Caco-2 (cell line): ENCODE measurements at regions of chr10 and their contacts with region 1.

Region 1: GRCh38 chr10:6275022-6275997 is 72.6 kb downstream of the PFKFB3 start:
- DNase-seq: peak; percentile 57 to 82
- H3K4me3 ChIP-seq: no peak overlapping the region
- H3K4me3 Mint-ChIP-seq: peak overlapping the region; percentile 66
- H3K27ac Mint-ChIP-seq: peak overlapping the region; percentile 51
- H3K4me1 ChIP-seq: peaks cover 35% of the 10 kb centered on the region
- H3K4me1 Mint-ChIP-seq: peaks cover 20% of the 10 kb centered on the region
- H3K27me3 ChIP-seq: no peaks in the 10 kb centered on the region
- H3K27me3 Mint-ChIP-seq: no peaks in the 10 kb centered on the region
- CTCF ChIP-seq: no peak

Region 2: GRCh38 chr10:5800790-5801189 is 474.5 kb before region 1 on chr10:
- CTCF ChIA-PET with region 1: no interaction called
- POLR2A ChIA-PET with region 1: no interaction called
- intact Hi-C with region 1: no loop called
- DNase-seq: no peak
- H3K4me3 ChIP-seq: no peak overlapping the region
- H3K4me3 Mint-ChIP-seq: no peak overlapping the region
- H3K27ac Mint-ChIP-seq: no peak overlapping the region
- H3K4me1 ChIP-seq: no peaks in the 10 kb centered on the region
- H3K4me1 Mint-ChIP-seq: peaks cover 6% of the 10 kb centered on the region
- H3K27me3 ChIP-seq: no peaks in the 10 kb centered on the region
- H3K27me3 Mint-ChIP-seq: no peaks in the 10 kb centered on the region
- CTCF ChIP-seq: no peak

Region 3: DNA sequence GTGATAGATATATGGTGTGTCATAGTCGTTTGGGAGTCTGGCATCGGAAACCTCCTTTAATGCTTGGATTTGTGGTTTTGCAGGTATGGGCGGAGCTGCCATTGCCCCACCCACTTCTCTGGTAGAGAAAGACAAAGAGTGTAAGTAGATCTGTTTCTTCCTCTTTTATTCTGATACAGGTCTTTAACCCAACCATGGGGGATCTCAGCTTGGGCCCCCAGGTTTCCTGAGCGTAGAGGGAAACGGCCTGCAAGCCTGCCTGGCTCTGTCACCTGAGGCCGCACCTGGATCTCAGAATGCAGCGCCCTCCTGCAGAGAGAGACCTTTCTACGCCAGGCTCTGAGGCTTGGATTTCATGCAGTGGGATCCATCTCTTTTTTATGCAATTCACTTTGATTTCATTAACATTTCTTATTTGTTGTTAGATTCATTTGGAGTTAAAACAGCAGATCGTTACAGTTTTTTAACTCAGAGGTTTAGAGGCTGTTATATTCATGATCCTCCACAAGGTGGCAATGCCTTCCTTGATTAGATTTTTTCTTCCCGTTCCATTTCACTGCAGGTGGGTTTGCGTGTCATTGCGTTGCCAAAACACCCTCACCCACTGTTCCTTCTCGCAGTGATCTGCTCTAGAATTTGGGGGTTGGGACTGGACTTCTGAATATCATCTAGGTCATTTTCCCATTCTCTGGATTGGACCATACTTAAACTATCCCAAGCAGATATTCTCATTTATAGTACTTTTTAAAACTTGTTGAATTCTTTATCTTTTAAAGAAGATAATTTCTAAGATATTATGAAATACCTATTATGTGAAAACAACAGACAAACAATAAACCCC is 166.5 kb before region 1 on chr10:
- CTCF ChIA-PET with region 1: no interaction called
- POLR2A ChIA-PET with region 1: no interaction called
- intact Hi-C with region 1: no loop called
- DNase-seq: peak in 1 of 2 experiments; percentile 47
- H3K4me3 ChIP-seq: no peak overlapping the region
- H3K4me3 Mint-ChIP-seq: no peak overlapping the region
- H3K27ac Mint-ChIP-seq: no peak overlapping the region
- H3K4me1 ChIP-seq: no peaks in the 10 kb centered on the region
- H3K4me1 Mint-ChIP-seq: no peaks in the 10 kb centered on the region
- H3K27me3 ChIP-seq: no peaks in the 10 kb centered on the region
- H3K27me3 Mint-ChIP-seq: no peaks in the 10 kb centered on the region
- CTCF ChIP-seq: peak; percentile 61 to 85

Region 4: GRCh38 chr10:6144406-6145165 is 130.7 kb before region 1 on chr10:
- CTCF ChIA-PET with region 1: no interaction called
- POLR2A ChIA-PET with region 1: no interaction called
- intact Hi-C with region 1: no loop called
- DNase-seq: peak; percentile 88 to 92
- H3K4me3 ChIP-seq: peak overlapping the region; percentile 94
- H3K4me3 Mint-ChIP-seq: peak overlapping the region; percentile 90
- H3K27ac Mint-ChIP-seq: peak overlapping the region; percentile 66
- H3K4me1 ChIP-seq: peaks cover 10% of the 10 kb centered on the region; the same call in 1 of the 2 replicates
- H3K4me1 Mint-ChIP-seq: peaks cover 6% of the 10 kb centered on the region
- H3K27me3 ChIP-seq: no peaks in the 10 kb centered on the region
- H3K27me3 Mint-ChIP-seq: peaks cover 1% of the 10 kb centered on the region
- CTCF ChIP-seq: no peak

Region 5: GRCh38 chr10:6239213-6239991 is 35.9 kb before region 1 on chr10:
- CTCF ChIA-PET with region 1: no interaction called
- POLR2A ChIA-PET with region 1: no interaction called
- intact Hi-C with region 1: loop called (anchors 5 kb)
- DNase-seq: peak; percentile 34 to 61
- H3K4me3 ChIP-seq: no peak overlapping the region
- H3K4me3 Mint-ChIP-seq: no peak overlapping the region
- H3K27ac Mint-ChIP-seq: no peak overlapping the region
- H3K4me1 ChIP-seq: peaks cover 6% of the 10 kb centered on the region; the same call in 1 of the 2 replicates
- H3K4me1 Mint-ChIP-seq: peaks cover 6% of the 10 kb centered on the region
- H3K27me3 ChIP-seq: no peaks in the 10 kb centered on the region
- H3K27me3 Mint-ChIP-seq: no peaks in the 10 kb centered on the region
- CTCF ChIP-seq: no peak

Region 6: GRCh38 chr10:6296425-6297296 is 21.4 kb after region 1 on chr10:
- CTCF ChIA-PET with region 1: no interaction called
- POLR2A ChIA-PET with region 1: no interaction called
- intact Hi-C with region 1: loop called (anchors 1 kb)
- DNase-seq: no peak
- H3K4me3 ChIP-seq: no peak overlapping the region
- H3K4me3 Mint-ChIP-seq: no peak overlapping the region
- H3K27ac Mint-ChIP-seq: peak overlapping the region; percentile 10
- H3K4me1 ChIP-seq: peaks cover 27% of the 10 kb centered on the region
- H3K4me1 Mint-ChIP-seq: peaks cover 14% of the 10 kb centered on the region
- H3K27me3 ChIP-seq: no peaks in the 10 kb centered on the region
- H3K27me3 Mint-ChIP-seq: no peaks in the 10 kb centered on the region
- CTCF ChIP-seq: no peak

Region 7: DNA sequence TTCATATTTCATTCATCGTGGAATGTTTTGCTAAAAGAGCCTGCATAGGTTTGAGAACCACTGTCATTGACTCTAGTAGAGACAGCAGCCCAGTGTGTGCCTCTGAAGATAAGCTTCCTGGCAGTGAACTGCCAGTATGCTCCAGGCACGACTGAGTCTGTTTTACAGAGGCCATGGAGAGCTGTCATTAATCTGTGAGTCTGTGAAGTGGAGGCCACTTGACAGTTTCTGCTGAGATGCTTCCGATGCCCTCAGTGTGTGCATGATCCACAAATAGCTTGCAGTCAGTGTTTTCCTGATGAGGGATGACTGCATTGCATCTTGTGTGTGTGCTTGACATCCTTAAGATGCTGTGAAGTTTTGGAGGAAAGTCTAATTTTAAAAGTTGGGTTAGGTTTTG is 89.6 kb after region 1 on chr10:
- CTCF ChIA-PET with region 1: interaction called, 5 read pairs
- POLR2A ChIA-PET with region 1: no interaction called
- intact Hi-C with region 1: loop called (anchors 10 kb)
- DNase-seq: no peak
- H3K4me3 ChIP-seq: no peak overlapping the region
- H3K4me3 Mint-ChIP-seq: no peak overlapping the region
- H3K27ac Mint-ChIP-seq: peak overlapping the region; percentile 87
- H3K4me1 ChIP-seq: peaks cover 36% of the 10 kb centered on the region
- H3K4me1 Mint-ChIP-seq: peaks cover 29% of the 10 kb centered on the region
- H3K27me3 ChIP-seq: no peaks in the 10 kb centered on the region
- H3K27me3 Mint-ChIP-seq: no peaks in the 10 kb centered on the region
- CTCF ChIP-seq: no peak